Activated T-helper 2 cell treated with anti-CD3 and anti-CD28 coated beads, Interferon-gamma antibody, Interleukin-2, Interleukin-4, amounts not matched to agents 10 μg/mL and 5 μg/mL and 100 μg/mL, durations not matched to agents 14 hours and 24 hours and 36 hours (primary cell): ENCODE measurements at regions of chr9 and their contacts with region 1.

Region 1: DNA sequence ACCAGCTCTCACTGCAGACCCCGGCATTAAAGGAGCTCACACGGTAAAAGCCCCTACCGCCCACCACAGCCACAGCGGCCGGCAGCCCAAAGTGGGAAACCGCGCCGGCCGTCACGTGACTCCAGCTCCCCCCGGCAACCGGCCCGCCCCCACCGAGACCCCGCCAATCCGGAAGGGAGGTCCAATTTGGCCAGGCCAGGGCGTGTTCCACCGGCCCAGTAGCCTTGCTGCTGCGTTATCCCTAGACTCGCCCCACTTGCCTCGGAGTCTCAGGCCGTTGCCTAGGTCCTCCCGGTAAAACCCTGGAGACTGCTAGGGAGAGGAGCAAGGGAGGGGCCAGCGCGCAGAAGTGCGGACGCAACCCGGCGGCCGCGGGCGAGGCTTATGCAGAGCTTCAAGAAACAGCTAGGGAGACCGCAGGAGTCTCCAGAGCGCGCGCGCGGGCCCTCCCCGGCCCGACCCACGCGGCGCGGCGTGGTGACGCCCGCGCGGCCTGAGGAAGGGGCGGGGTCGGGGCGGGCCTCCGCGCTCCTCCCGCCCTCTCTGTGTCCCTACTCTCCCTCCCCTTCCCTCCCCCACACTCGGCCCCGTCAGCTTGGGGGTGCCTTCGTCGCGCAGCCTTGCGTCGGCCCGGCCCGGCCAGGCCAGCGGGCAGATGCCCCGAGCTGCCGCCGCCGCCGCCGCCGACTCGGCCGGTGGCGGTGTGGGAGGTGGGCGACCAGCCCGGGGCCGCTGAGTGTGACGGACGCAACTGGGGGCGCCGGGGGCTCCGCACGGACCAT is at the start of gene RIC1:
- DNase-seq: peak; percentile 89
- H3K4me3 Mint-ChIP-seq: peak within 1 kb of the TSS; percentile 100
- H3K27ac Mint-ChIP-seq: peak within 1 kb of the TSS; percentile 97
- H3K4me1 Mint-ChIP-seq: peaks cover 56% of the 10 kb centered on the region
- H3K27me3 Mint-ChIP-seq: no peaks in the 10 kb centered on the region
- total RNA-seq, gene RIC1: 21.5 and 22.1 TPM in 2 replicates

Region 2: GRCh38 chr9:4792572-4793458 is 835.9 kb before region 1 on chr9 and contains the start of gene RCL1:
- intact Hi-C with region 1: loop called (anchors 2 kb)
- DNase-seq: peak; percentile 97
- H3K4me3 Mint-ChIP-seq: peak within 1 kb of the TSS; percentile 93
- H3K27ac Mint-ChIP-seq: peak within 1 kb of the TSS; percentile 90
- H3K4me1 Mint-ChIP-seq: peaks cover 40% of the 10 kb centered on the region
- H3K27me3 Mint-ChIP-seq: peaks cover 2% of the 10 kb centered on the region
- total RNA-seq, gene RCL1: 34.5 and 36.3 TPM in 2 replicates

Region 3: DNA sequence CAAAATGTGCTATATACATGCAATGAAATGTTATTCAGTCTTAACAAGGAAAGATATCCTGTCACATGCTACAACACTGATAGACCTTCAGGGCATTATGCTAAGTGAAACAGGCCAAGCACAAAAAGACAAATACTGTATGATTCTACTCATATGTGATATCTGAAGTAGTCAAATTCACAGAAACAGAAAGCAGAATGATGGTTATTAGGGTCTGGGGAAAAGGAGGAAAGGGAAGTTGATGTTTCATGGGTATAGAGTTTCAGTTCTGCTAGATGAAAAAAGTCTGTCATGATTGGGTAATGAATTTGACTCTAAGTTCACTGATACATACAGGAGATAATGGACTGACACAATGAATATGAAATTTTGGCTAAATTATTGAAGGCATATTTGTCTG is 11.0 kb before region 1 on chr9:
- intact Hi-C with region 1: loop called (anchors 1 kb)
- DNase-seq: no peak
- H3K4me3 Mint-ChIP-seq: no peak overlapping the region
- H3K27ac Mint-ChIP-seq: peak overlapping the region; percentile 34
- H3K4me1 Mint-ChIP-seq: peaks cover 30% of the 10 kb centered on the region
- H3K27me3 Mint-ChIP-seq: no peaks in the 10 kb centered on the region

Region 4: DNA sequence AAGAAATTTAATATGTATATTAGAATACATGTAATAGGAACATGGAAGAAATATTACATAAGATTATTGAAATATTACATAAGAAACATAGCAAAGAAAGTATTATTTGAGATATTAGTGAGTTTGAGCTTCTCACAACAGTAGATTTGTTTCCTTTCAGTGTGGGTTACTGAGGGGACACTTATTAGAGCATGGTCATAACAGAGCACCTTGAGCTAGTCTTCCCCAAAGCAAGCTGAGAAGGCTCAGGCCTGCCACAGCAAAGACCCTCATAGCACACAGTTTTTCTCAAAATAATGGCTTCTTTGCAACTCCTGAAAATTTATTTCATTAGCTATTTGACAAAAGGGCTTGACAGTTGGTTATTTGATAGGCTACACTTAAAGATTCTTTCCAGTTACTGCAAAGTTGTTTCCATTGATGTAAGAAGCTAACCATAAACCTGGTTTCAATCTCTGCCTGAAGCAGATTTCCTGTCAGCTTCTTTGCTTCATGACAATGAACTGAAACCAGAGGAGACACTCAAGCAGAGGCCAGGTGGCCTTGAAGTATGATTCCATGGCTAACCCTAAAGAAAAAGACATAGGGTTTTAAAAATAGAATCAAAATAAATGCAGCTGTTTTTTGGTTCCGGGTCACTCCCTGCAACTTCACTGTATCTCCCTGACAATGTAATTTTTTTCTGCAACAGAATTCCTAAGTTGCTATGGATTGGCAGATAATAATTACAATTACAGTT is 135.6 kb after region 1 on chr9:
- intact Hi-C with region 1: loop called (anchors 5 kb)
- DNase-seq: no peak
- H3K4me3 Mint-ChIP-seq: no peak overlapping the region
- H3K27ac Mint-ChIP-seq: peak overlapping the region; percentile 61
- H3K4me1 Mint-ChIP-seq: peaks cover 43% of the 10 kb centered on the region
- H3K27me3 Mint-ChIP-seq: no peaks in the 10 kb centered on the region

Region 5: DNA sequence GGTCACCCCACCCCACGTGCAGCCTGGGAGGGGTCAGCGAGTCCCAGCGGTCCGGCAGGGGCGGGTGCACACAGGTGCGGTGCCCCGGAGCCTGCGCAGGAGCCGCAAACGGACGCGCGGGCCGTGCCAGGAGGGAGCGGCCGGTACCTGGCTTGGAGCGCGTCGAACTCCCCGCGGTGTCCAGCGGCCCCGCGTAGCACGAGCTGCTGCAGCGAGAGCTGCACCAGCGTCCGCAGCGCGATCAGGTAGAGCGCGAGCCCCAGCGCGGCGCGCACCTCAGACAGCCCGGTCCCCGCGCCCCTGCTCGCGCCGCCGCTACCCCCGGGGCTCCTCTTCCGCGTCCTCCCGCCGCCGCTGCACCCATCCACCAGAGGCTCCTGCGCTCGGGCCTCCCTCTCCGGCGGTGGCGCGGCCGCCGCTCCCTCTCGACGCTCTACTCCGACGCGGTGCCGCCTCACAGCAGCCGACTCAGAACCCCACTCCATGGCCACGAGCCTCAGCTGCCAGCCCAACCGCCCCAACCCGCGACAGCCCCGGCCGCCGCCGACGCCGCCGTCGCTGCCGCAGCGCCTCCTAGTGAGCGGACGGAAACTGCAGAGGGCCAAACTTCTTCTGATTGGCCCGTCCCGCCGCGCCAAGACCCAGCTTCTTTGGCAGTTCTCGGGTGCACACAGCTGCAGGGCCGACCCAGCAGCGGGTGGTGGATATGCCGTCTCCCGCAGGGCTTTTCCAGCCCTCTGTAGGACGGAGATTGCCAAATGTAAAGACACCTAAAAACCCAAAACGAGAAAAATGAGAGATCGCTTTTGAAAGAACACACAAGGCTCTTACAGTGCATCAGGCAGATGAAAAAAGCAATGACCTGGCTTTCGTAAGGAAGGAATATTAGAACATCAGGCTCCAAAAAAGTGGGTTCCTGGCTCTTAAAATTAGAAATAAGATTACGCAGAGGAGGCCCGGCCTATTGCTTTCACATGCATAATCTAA is 204.1 kb after region 1 on chr9 and contains the start of gene ERMP1:
- intact Hi-C with region 1: loop called (anchors 5 kb)
- DNase-seq: peak; percentile 87
- H3K4me3 Mint-ChIP-seq: peak within 1 kb of the TSS; percentile 94
- H3K27ac Mint-ChIP-seq: peak within 1 kb of the TSS; percentile 79
- H3K4me1 Mint-ChIP-seq: peaks cover 53% of the 10 kb centered on the region
- H3K27me3 Mint-ChIP-seq: no peaks in the 10 kb centered on the region
- total RNA-seq, gene ERMP1: 21.1 and 25.3 TPM in 2 replicates

Region 6: DNA sequence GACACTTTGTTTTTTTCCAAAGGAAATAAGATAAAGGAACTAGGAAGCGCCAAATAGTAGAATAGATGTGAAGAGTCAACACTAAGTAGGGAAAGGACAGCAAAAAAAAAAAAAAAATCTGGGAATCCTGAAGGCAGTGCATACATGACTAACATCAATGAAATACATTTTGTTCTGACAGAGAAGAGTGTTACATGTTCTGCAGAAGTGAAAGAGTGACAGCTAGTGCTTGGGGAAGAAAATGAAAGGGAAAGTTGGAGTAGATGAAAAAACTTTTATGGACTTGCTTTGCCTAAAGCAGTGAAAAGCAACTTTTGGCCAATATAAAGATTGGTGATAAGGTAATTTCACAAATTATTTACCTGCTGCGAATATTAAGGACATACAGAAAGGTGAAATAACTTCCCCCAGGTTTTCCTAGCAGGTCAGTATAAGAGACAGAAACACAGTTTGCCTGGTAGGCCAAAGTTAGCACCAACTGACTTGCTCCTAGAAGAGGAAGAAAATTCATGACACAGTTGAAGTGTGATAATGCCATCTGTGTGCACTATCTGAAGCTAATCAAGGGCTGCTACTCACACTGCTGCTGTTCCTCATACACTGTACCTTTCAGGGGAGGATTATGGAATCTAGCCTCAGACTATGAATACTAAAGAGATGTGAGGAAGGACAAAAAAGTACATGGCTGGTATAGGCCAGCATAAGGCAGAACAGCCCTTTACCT is 348.1 kb after region 1 on chr9:
- intact Hi-C with region 1: no loop called
- DNase-seq: no peak
- H3K4me3 Mint-ChIP-seq: no peak overlapping the region
- H3K27ac Mint-ChIP-seq: peak overlapping the region; percentile 44
- H3K4me1 Mint-ChIP-seq: peaks cover 16% of the 10 kb centered on the region
- H3K27me3 Mint-ChIP-seq: no peaks in the 10 kb centered on the region

Region 7: GRCh38 chr9:6008169-6008979 is 379.7 kb after region 1 on chr9:
- intact Hi-C with region 1: loop called (anchors 1 kb)
- DNase-seq: peak; percentile 92
- H3K4me3 Mint-ChIP-seq: peak overlapping the region; percentile 74
- H3K27ac Mint-ChIP-seq: peak overlapping the region; percentile 84
- H3K4me1 Mint-ChIP-seq: peaks cover 53% of the 10 kb centered on the region
- H3K27me3 Mint-ChIP-seq: no peaks in the 10 kb centered on the region

Region 8: GRCh38 chr9:6068983-6069382 is 440.3 kb after region 1 on chr9:
- intact Hi-C with region 1: no loop called
- DNase-seq: no peak
- H3K4me3 Mint-ChIP-seq: peak overlapping the region; percentile 31
- H3K27ac Mint-ChIP-seq: peak overlapping the region; percentile 83
- H3K4me1 Mint-ChIP-seq: peaks cover 10% of the 10 kb centered on the region
- H3K27me3 Mint-ChIP-seq: peaks cover 3% of the 10 kb centered on the region